Activated CD4-positive, alpha-beta T cell treated with anti-CD3 and anti-CD28 coated beads, Interleukin-2, amount 10 ng/mL, durations not matched to agents 7 days and 5 days (primary cell): ENCODE measurements at regions of chr9 and their contacts with region 1.

Region 1: DNA sequence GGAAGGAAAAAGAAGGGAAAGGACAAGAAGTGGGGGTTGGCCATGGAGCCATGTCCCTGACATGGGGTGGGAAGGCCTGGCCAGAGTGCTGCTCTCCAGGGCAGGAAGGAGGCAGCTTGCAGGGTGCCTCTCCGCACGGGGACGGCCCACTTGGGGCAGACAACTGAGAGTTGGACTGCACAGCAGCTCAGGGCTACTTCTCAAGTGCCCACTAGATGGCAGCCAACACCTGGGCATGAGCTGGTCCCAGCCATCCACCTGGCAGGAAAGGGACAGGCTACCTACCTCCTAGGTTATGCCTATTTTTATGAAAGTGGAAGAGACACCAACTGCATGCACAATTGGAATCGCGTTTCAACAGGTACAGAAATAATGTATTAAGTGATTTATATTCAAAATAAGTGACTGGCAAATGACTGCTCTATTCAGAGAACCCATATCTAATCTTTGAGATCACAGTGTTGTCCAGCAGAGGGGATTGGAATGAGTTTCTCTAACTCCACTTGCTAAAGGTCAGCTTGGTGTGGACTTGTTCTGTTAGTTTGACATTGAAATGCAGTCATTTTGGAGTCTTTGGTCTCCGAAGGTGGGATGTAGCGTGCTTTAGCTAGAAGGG is 113.4 kb downstream of the SYK start:
- DNase-seq: peak; percentile 81
- H3K4me3 Mint-ChIP-seq: no peak overlapping the region
- H3K27ac Mint-ChIP-seq: no peak overlapping the region
- H3K4me1 Mint-ChIP-seq: no peaks in the 10 kb centered on the region
- H3K27me3 Mint-ChIP-seq: no peaks in the 10 kb centered on the region

Region 2: GRCh38 chr9:89360471-89360870 is 1554.5 kb before region 1 on chr9:
- CTCF ChIA-PET with region 1: no interaction called
- POLR2A ChIA-PET with region 1: no interaction called
- DNase-seq: no peak
- H3K4me3 Mint-ChIP-seq: no peak overlapping the region
- H3K27ac Mint-ChIP-seq: no peak overlapping the region
- H3K4me1 Mint-ChIP-seq: peaks cover 12% of the 10 kb centered on the region
- H3K27me3 Mint-ChIP-seq: no peaks in the 10 kb centered on the region

Region 3: GRCh38 chr9:91422758-91423711 is 508.1 kb after region 1 on chr9:
- CTCF ChIA-PET with region 1: interaction called, 43 read pairs
- POLR2A ChIA-PET with region 1: no interaction called
- DNase-seq: peak; percentile 71
- H3K4me3 Mint-ChIP-seq: peak overlapping the region; percentile 96
- H3K27ac Mint-ChIP-seq: peak overlapping the region; percentile 91
- H3K4me1 Mint-ChIP-seq: peaks cover 63% of the 10 kb centered on the region
- H3K27me3 Mint-ChIP-seq: no peaks in the 10 kb centered on the region

Region 4: DNA sequence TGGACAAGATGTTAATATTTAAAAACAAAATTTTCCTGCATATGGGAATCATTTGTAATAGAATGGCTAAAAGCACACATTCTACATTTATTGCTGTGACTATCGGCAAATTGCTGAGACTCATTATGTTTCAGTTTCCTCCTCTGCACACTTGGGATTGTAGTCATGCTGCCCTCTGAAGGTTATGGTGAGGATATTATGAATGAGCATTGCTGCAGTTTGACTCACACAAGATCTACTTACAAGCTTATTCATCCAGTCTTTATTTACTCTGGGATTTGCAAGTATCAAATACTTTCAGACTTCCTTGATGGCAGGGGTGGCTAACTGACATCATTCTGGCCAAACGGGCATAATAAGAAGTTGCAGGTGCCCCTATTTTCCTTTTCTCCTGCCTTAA is 518.2 kb after region 1 on chr9:
- CTCF ChIA-PET with region 1: interaction called, 14 read pairs
- POLR2A ChIA-PET with region 1: no interaction called
- DNase-seq: peak; percentile 35
- H3K4me3 Mint-ChIP-seq: no peak overlapping the region
- H3K27ac Mint-ChIP-seq: no peak overlapping the region
- H3K4me1 Mint-ChIP-seq: peaks cover 10% of the 10 kb centered on the region
- H3K27me3 Mint-ChIP-seq: peaks cover 18% of the 10 kb centered on the region